Colonic mucosa (tissue), 4 donors: ENCODE measurements at regions of chr19 and their contacts with region 1.

Region 1: GRCh38 chr19:36169084-36169760 is 17.0 kb upstream of the COX7A1 start:
- DNase-seq: peak; percentile 69
- H3K4me3 ChIP-seq: no peak overlapping the region
- H3K27ac ChIP-seq: peak overlapping the region; percentile 88
- H3K4me1 ChIP-seq: no peaks in the 10 kb centered on the region
- H3K27me3 ChIP-seq: no peaks in the 10 kb centered on the region
- CTCF ChIP-seq: no peak

Region 2: GRCh38 chr19:36060430-36060829 is 108.8 kb before region 1 on chr19:
- intact Hi-C with region 1: loop called (anchors 10 kb)
- DNase-seq: no peak
- H3K4me3 ChIP-seq: no peak overlapping the region
- H3K27ac ChIP-seq: no peak overlapping the region
- H3K4me1 ChIP-seq: peaks cover under 1% of the 10 kb centered on the region
- H3K27me3 ChIP-seq: no peaks in the 10 kb centered on the region
- CTCF ChIP-seq: no peak

Region 3: GRCh38 chr19:36132489-36132891 is 36.7 kb before region 1 on chr19:
- intact Hi-C with region 1: loop called (anchors 2 kb)
- DNase-seq: peak; percentile 58
- H3K4me3 ChIP-seq: no peak overlapping the region
- H3K27ac ChIP-seq: peak overlapping the region; percentile 50
- H3K4me1 ChIP-seq: peaks cover 19% of the 10 kb centered on the region
- H3K27me3 ChIP-seq: no peaks in the 10 kb centered on the region
- CTCF ChIP-seq: no peak

Region 4: GRCh38 chr19:37719927-37720265 is 1550.7 kb after region 1 on chr19:
- intact Hi-C with region 1: no loop called
- DNase-seq: no peak
- H3K4me3 ChIP-seq: peak overlapping the region; percentile 66
- H3K27ac ChIP-seq: peak overlapping the region; percentile 35
- H3K4me1 ChIP-seq: no peaks in the 10 kb centered on the region
- H3K27me3 ChIP-seq: no peaks in the 10 kb centered on the region
- CTCF ChIP-seq: no peak